Activated naive CD4-positive, alpha-beta T cell treated with anti-CD3 and anti-CD28 coated beads for 36 hours (primary cell): ENCODE measurements at regions of chr5 and their contacts with region 1.

Region 1: GRCh38 chr5:52948418-52949076 is 40.6 kb upstream of the ITGA2 start:
- DNase-seq: peak; percentile 83
- H3K4me3 Mint-ChIP-seq: no peak overlapping the region
- H3K27ac Mint-ChIP-seq: no peak overlapping the region
- H3K4me1 Mint-ChIP-seq: peaks cover 14% of the 10 kb centered on the region
- H3K27me3 Mint-ChIP-seq: no peaks in the 10 kb centered on the region

Region 2: GRCh38 chr5:52989781-52990527 is 41.4 kb after region 1 on chr5:
- CTCF ChIA-PET with region 1: interaction called, 18 read pairs
- intact Hi-C with region 1: loop called (anchors 1 kb)
- DNase-seq: peak; percentile 73
- H3K4me3 Mint-ChIP-seq: peak overlapping the region; percentile 79
- H3K27ac Mint-ChIP-seq: peak overlapping the region; percentile 50
- H3K4me1 Mint-ChIP-seq: peaks cover 21% of the 10 kb centered on the region
- H3K27me3 Mint-ChIP-seq: peaks cover 4% of the 10 kb centered on the region

Region 3: DNA sequence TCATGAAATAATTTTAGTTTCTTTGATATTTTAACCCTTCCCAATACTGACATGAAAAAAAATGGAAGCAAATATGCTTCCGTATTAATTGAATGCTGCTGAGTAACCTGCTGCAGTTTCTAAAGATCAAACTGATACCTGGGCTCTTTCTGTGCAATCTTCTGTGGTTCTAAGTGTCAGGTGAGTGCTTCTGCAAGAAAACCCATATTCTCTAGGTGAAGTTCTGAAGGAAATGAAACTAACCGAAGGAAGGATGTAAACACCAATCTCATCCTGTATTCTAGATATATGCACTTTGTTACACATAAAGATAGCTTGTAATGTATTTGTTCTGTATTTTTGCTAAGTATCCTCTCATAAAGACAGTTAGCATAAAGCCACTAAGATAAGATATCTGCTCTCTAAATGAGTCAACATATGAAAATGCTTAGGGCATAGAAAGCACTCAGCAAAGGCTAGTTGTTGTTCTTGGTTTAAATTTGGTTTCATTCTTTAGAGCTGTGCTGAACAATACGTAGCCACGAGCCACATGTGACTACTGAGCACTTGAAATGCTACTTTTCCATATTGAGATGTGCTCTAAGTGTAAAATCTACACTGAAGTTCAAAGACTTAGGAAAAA is 92.6 kb after region 1 on chr5:
- CTCF ChIA-PET with region 1: interaction called, 24 read pairs
- intact Hi-C with region 1: loop called (anchors 2 kb)
- DNase-seq: peak; percentile 22
- H3K4me3 Mint-ChIP-seq: no peak overlapping the region
- H3K27ac Mint-ChIP-seq: no peak overlapping the region
- H3K4me1 Mint-ChIP-seq: peaks cover 35% of the 10 kb centered on the region
- H3K27me3 Mint-ChIP-seq: peaks cover 6% of the 10 kb centered on the region

Region 4: GRCh38 chr5:53095931-53096525 is 147.5 kb after region 1 on chr5:
- CTCF ChIA-PET with region 1: interaction called, 181 read pairs
- intact Hi-C with region 1: loop called (anchors 1 kb)
- DNase-seq: peak; percentile 89
- H3K4me3 Mint-ChIP-seq: no peak overlapping the region
- H3K27ac Mint-ChIP-seq: no peak overlapping the region
- H3K4me1 Mint-ChIP-seq: peaks cover 4% of the 10 kb centered on the region
- H3K27me3 Mint-ChIP-seq: no peaks in the 10 kb centered on the region

Region 5: GRCh38 chr5:53114988-53115387 is 166.4 kb after region 1 on chr5:
- CTCF ChIA-PET with region 1: interaction called, 7 read pairs
- intact Hi-C with region 1: loop called (anchors 1 kb)
- DNase-seq: no peak
- H3K4me3 Mint-ChIP-seq: no peak overlapping the region
- H3K27ac Mint-ChIP-seq: no peak overlapping the region
- H3K4me1 Mint-ChIP-seq: peaks cover 9% of the 10 kb centered on the region
- H3K27me3 Mint-ChIP-seq: no peaks in the 10 kb centered on the region